Psoas muscle (tissue), 8 donors: ENCODE measurements at regions of chr1 and their contacts with region 1.

Region 1: DNA sequence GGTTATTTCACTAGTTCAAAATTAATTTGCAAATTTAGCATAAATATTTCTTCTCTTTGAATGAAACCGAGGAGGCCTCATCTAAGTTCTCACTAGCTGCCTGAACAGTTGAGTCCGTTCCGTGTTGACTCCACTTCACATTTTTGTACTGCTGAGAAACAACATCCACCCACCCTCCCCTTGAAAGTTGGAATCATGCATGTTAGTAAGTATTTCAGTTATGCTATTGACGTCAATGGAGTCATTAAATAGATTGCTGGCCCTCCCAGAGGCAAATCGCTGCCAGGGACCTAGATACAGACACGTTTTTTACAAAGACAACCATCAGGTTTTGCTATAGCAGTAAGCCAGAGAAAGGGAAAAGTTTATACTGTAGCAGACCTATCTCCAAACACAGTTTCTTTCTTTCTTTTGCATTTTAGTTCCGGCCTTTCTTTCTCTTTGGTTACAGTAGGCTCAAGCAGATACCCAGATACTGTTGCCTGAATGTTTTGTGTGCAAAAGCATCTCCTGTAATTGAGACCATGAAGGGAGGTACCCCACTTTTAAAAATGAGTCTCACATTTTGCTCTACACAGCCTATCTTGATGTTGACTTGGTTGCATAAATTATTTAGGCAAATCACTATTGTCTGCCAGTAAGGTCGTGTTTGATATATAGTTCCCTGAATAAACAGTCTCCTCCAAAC is 262.6 kb upstream of the SGIP1 start:
- DNase-seq: peak; percentile 76 to 87
- ATAC-seq: peak; percentile 91 to 94 (median 93)
- H3K4me3 ChIP-seq: peak overlapping the region; percentile 50
- H3K27ac ChIP-seq: peak overlapping the region; percentile 88
- H3K4me1 ChIP-seq: peaks cover 75% of the 10 kb centered on the region
- H3K27me3 ChIP-seq: no peaks in the 10 kb centered on the region
- CTCF ChIP-seq: no peak

Region 2: GRCh38 chr1:66300972-66301451 is 29.7 kb after region 1 on chr1:
- intact Hi-C with region 1: loop called (anchors 2 to 5 kb)
- DNase-seq: no peak
- ATAC-seq: peak; percentile 60 to 82 (median 64)
- H3K4me3 ChIP-seq: peak overlapping the region; percentile 56
- H3K27ac ChIP-seq: peak overlapping the region; percentile 83
- H3K4me1 ChIP-seq: peaks cover 26% of the 10 kb centered on the region
- H3K27me3 ChIP-seq: no peaks in the 10 kb centered on the region
- CTCF ChIP-seq: no peak

Region 3: DNA sequence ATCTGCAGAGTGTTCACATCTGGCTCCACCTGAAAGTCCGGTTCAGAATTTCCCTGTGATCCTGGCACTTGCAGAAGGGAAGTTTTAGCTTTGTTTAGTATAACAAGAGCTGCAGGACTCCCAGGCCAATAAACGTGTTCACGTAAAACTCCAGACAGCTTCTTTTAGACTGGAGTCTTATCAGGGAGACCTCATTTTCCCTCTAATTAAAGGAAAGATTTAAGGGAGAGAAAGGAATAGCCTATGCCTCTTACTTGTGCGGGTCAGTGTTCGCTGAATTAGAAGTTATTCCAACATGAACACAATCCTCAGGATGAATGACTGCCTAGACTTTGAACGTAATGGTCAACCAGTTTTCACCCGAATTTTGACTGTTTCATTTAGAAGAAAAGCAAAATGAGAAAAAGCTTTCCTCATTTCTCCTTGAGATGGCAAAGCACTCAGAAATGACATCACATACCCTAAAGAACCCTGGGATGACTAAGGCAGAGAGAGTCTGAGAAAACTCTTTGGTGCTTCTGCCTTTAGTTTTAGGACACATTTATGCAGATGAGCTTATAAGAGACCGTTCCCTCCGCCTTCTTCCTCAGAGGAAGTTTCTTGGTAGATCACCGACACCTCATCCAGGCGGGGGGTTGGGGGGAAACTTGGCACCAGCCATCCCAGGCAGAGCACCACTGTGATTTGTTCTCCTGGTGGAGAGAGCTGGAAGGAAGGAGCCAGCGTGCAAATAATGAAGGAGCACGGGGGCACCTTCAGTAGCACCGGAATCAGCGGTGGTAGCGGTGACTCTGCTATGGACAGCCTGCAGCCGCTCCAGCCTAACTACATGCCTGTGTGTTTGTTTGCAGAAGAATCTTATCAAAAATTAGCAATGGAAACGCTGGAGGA is 60.5 kb after region 1 on chr1:
- intact Hi-C with region 1: loop called (anchors 1 to 2 kb)
- DNase-seq: peak; percentile 78 to 81
- ATAC-seq: peak; percentile 73 to 76 (median 74)
- H3K4me3 ChIP-seq: peak overlapping the region; percentile 89
- H3K27ac ChIP-seq: peak overlapping the region; percentile 95
- H3K4me1 ChIP-seq: peaks cover 40% of the 10 kb centered on the region
- H3K27me3 ChIP-seq: no peaks in the 10 kb centered on the region
- CTCF ChIP-seq: peak; percentile 44